Posterior vena cava (tissue), 2 donors: ENCODE measurements at regions of chr18 and their contacts with region 1.

Region 1: DNA sequence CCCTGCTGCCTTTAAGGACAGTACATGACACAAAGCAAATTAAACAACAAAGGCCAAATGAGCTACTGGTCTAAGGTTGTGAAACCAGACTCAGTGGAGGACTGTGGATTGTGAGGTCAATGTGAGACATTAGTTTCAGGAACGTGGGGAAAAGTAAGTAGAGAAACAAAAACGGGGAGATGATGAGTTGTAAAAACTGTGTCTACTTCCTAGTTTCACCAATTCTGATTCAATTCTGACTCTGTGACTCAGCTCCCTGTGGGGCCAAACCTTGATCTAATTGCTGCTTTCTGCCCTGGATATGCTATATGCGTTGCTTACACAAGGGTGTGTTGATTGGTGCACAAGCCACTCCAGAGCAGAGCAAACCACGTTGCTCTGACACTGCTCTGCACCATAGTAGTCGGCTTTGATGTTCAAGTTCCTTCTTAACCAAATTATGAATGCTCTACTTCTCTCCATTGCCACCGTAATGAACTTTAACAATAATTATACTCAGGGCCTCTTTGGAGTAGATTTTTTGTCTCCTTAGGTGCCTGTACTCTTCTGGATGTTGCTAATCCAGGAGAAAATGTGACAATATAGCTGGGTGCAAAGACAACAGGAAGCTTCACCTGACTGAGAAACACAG is 1640.1 kb upstream of the CELF4 start:
- DNase-seq: no peak

Region 2: DNA sequence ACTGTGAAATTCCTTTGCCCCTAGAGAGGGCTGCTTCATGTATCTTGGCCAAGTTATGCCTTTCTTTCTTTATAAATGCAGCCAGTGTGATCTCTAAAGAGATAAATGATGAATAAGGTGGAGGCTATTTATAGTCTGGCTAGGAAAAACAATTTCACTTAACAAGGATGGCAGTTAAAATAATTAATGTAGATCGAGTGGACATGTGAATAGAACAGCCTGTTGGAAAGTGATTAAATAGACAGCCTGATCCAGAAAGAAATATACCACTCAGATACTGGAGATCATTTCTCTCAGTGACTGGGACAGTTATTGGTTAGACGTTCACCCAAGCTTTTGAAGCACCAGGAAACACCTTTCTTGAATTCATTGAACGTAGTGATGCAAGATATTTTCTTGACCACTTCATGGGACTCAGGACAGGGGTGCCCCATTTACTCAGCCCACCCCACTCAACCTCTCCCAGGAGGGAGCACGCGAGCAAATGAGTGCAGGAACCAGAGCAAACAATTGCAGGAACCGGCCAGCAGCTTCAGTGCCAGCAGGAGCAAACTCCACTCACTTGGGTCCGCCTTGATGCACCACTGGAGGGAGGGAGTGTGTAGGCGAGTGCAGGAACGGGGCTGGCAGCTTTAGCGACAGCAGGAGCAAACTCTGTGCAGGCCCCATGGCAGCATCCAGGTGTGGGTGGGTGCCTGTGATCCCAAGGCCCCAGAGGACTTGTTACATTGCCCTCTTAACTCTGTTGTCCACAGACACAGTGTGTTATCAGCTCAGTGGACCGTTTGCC is 27.1 kb after region 1 on chr18:
- intact Hi-C with region 1: loop called in 1 of 2 experiments (anchors 1 kb)
- DNase-seq: peak; percentile 57